MCF 10A (cell line): ENCODE measurements at regions of chr14 and their contacts with region 1.

Region 1: DNA sequence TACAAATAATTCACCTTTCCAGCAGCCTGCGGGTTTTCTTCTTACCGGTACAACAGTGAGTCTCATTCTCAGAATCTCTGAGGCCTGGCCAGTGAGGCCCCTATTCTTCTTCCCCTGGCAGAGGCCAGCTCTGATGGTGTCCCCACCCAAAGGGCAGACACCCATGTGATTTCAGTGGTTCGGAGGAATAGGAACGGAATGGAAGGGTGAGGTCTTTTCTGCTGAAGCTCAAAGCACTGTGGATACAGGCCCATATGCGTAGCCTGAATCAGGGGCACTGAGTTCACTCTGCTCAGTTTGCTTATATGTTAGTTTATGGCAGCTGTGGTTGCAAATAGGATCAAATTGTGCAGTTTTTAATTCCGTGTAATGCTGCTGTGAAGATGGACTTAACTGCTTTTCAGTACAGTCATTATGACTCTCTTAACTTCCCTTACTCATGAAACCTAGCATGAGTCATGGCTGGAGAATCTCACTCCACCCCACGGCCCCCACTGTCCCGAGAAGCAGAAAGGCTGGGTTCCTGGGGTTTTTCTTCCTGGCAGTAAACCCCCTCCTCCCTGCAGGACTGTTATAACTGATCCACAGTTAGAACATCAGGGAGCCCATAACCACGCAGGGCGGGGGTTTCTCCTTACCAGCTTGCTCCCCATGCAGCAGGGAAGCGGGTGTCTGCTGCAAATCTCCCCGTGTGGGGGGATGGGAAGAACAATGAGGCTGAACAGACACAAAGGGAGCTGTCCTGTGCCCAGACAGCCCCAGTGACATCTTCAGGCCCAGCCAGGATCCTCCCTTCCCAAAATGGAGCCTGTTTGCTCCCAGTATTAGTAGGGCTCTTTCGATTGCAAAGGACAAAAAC is 122.7 kb downstream of the SLC38A6 start:
- DNase-seq: peak; percentile 91
- H3K4me3 Mint-ChIP-seq: peak overlapping the region; percentile 60
- H3K27ac Mint-ChIP-seq: peak overlapping the region; percentile 98
- H3K4me1 Mint-ChIP-seq: peaks cover 43% of the 10 kb centered on the region
- H3K27me3 Mint-ChIP-seq: no peaks in the 10 kb centered on the region
- CTCF ChIP-seq: no peak

Region 2: DNA sequence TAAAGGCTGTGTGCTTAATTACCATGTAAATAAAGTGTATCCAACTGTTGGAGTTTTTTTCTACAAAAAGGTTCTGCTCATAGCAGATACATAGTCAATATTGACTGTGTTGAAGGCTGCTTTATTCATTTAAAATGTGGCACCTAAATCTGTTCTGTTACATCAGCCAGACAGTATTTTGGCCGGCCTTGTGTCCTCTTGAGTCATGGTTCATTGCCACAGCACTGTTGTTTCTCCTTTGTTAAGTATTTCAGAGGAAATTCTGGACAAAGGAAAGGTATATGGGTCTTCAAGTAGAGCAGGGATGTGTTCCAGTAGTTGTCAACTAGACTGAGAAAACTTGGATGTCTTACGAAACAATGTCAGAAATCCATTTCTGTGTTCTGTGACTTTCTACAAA is 27.2 kb before region 1 on chr14:
- CTCF ChIA-PET with region 1: no interaction called
- POLR2A ChIA-PET with region 1: interaction called, 17 read pairs
- intact Hi-C with region 1: no loop called
- DNase-seq: peak; percentile 58
- H3K4me3 Mint-ChIP-seq: no peak overlapping the region
- H3K27ac Mint-ChIP-seq: peak overlapping the region; percentile 8
- H3K4me1 Mint-ChIP-seq: peaks cover 17% of the 10 kb centered on the region
- H3K27me3 Mint-ChIP-seq: no peaks in the 10 kb centered on the region
- CTCF ChIP-seq: no peak

Region 3: DNA sequence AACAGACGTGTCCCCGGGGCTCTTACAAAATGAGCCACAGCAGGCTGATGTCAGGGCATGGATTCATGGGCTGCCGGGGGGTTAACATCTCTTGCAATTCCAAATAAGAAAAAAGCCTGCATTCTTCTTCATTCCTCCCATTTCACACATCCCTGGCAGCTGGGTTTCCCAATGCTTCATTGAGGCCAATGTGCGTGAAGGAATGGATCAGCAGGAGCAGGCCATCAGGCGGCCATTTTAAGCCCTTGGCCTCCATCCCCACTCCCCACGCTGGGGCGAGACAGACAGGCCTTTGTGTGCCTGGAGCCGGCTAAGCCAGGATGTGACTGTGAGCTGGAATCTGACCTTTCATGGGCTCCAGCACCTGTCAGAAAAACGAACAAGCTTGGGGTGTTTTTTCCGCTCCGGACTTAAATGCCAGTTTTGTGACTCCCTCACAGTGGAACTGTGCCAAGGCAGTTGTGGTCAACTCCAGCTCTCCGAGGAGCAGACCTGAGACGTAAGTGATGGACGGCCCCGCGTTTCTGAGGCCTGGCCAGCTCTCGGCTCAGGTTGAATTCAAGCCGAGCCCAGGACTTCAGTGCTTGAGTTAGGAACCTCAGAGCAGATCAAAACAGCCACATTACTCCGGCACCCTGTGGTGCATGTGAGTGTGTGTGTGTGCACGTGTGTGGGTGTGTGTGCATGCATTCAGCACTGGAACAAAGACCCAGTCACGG is 44.3 kb after region 1 on chr14:
- CTCF ChIA-PET with region 1: interaction called, 4 read pairs
- POLR2A ChIA-PET with region 1: interaction called, 11 read pairs
- intact Hi-C with region 1: loop called (anchors 2 kb)
- DNase-seq: peak; percentile 91
- H3K4me3 Mint-ChIP-seq: peak overlapping the region; percentile 33
- H3K27ac Mint-ChIP-seq: peak overlapping the region; percentile 95
- H3K4me1 Mint-ChIP-seq: peaks cover 67% of the 10 kb centered on the region
- H3K27me3 Mint-ChIP-seq: no peaks in the 10 kb centered on the region
- CTCF ChIP-seq: no peak

Region 4: GRCh38 chr14:61178226-61179060 is 74.7 kb after region 1 on chr14:
- CTCF ChIA-PET with region 1: no interaction called
- POLR2A ChIA-PET with region 1: no interaction called
- intact Hi-C with region 1: loop called (anchors 10 kb)
- DNase-seq: peak; percentile 95
- H3K4me3 Mint-ChIP-seq: peak overlapping the region; percentile 44
- H3K27ac Mint-ChIP-seq: peak overlapping the region; percentile 64
- H3K4me1 Mint-ChIP-seq: peaks cover 28% of the 10 kb centered on the region
- H3K27me3 Mint-ChIP-seq: no peaks in the 10 kb centered on the region
- CTCF ChIP-seq: no peak